ENCODE measurements at regions of chr3 and their contacts with region 1.

Region 1: DNA sequence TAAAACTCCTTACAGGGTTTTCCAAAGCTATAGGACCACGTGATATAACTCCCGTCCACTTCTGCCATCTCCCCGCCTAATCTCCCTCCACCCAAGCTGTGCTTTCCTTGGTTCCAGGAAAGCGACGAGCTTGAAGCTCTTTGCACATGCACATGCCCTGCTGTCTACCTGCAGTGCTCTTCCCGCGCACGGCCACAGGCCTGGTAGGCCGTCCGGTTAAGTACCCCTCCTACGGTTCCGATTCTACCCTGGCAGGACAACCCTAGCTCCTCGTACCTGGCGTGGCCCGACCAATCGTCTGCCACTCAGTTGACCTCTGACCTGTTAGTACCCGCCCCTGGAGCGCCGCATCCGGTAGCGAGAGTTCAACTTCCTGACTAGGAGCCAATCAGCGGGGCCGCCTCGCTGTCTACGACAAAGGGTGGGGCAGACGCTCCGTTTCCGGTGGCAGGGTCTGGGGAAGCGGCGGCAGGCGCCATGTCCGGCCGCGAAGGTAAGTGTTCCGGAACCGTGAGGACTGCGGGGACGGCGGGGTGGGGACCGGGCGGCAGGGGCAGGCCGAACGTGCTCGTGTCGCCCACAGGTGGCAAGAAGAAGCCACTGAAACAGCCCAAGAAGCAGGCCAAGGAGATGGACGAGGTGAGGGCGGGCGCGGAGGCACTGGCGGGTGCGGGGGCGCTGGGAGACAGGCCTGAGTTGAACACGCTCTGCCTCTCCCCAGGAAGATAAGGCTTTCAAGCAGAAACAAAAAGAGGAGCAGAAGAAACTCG is at the starts of genes CCDC51 and TMA7:
- DNase-seq: peak; percentile 93
- H3K4me3 ChIP-seq: peak within 1 kb of the TSS; percentile 74
- H3K27ac ChIP-seq: peak within 1 kb of the TSS; percentile 80
- H3K4me1 ChIP-seq: no peaks in the 10 kb centered on the region
- H3K27me3 ChIP-seq: no peaks in the 10 kb centered on the region
- CTCF ChIP-seq: no peak
- total RNA-seq, gene CCDC51: 11.7 and 11.8 TPM in 2 replicates
- total RNA-seq, gene TMA7: 118 and 152 TPM in 2 replicates

Region 2: DNA sequence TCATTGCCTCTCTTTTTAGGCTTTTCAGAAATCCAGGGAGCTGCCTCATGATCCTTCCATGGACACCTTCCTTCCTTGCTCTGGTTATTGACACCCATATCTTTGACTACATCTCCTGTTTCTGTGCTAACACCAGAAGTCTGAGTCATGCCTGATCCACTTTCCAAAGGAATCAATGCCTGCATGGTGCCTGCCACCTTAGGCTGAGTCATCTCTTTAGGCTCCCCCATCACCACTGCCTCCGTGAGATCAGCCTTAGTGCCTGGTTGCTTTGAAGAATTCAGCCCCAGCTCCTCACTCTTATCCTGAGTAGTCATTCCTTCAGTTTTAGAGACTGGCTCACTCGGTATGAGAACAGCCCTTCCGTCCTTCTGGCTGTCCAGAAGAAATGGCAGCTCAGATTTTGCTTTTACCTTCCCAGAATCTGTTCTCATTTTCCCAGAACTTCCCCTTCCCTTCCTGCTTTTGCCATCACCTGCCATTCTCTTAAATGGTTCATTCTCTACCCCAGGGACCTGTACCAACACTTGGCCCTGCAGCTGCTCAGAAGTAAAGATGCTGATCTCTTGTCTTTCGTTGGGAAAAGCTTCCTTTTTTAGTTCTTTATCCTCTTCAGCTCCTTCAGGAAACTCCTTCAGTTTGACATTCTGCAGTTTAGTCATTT is 529.1 kb before region 1 on chr3:
- CTCF ChIA-PET with region 1: no interaction called
- POLR2A ChIA-PET with region 1: no interaction called
- intact Hi-C with region 1: no loop called
- DNase-seq: peak; percentile 32
- H3K4me3 ChIP-seq: no peak overlapping the region
- H3K27ac ChIP-seq: no peak overlapping the region
- H3K4me1 ChIP-seq: no peaks in the 10 kb centered on the region
- H3K27me3 ChIP-seq: no peaks in the 10 kb centered on the region
- CTCF ChIP-seq: no peak

Region 3: GRCh38 chr3:48194446-48195071 is 245.4 kb before region 1 on chr3:
- CTCF ChIA-PET with region 1: interaction called, 16 read pairs
- POLR2A ChIA-PET with region 1: no interaction called
- intact Hi-C with region 1: no loop called
- DNase-seq: peak; percentile 72
- H3K4me3 ChIP-seq: no peak overlapping the region
- H3K27ac ChIP-seq: no peak overlapping the region
- H3K4me1 ChIP-seq: no peaks in the 10 kb centered on the region
- H3K27me3 ChIP-seq: no peaks in the 10 kb centered on the region
- CTCF ChIP-seq: peak; percentile 72

Region 4: DNA sequence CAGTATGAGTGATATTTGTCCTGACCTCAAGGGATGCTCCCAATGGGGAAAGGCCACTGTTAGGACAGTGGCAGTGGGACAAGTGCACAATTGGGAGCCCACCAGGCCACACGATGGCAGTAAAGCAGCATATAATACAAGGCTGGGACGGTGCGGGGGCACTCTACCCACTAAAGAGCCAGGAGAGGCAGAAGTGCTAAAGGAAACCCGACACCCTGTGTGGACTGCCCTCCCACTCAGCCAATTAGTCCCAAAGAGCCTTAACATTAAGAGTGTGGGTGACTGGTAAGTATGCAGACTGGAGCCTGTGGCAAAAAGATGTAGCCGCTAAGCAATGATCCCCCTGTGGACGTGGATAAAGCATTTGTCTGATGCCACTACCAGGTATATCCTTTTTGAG is 207.3 kb before region 1 on chr3:
- CTCF ChIA-PET with region 1: interaction called, 4 read pairs
- POLR2A ChIA-PET with region 1: no interaction called
- intact Hi-C with region 1: loop called (anchors 1 kb)
- DNase-seq: peak; percentile 85
- H3K4me3 ChIP-seq: no peak overlapping the region
- H3K27ac ChIP-seq: no peak overlapping the region
- H3K4me1 ChIP-seq: peaks cover 11% of the 10 kb centered on the region
- H3K27me3 ChIP-seq: no peaks in the 10 kb centered on the region
- CTCF ChIP-seq: peak; percentile 73

Region 5: GRCh38 chr3:48273594-48274211 is 166.3 kb before region 1 on chr3:
- CTCF ChIA-PET with region 1: interaction called, 11 read pairs
- POLR2A ChIA-PET with region 1: no interaction called
- intact Hi-C with region 1: no loop called
- DNase-seq: peak; percentile 47
- H3K4me3 ChIP-seq: no peak overlapping the region
- H3K27ac ChIP-seq: no peak overlapping the region
- H3K4me1 ChIP-seq: no peaks in the 10 kb centered on the region
- H3K27me3 ChIP-seq: no peaks in the 10 kb centered on the region
- CTCF ChIP-seq: peak; percentile 60

Region 6: DNA sequence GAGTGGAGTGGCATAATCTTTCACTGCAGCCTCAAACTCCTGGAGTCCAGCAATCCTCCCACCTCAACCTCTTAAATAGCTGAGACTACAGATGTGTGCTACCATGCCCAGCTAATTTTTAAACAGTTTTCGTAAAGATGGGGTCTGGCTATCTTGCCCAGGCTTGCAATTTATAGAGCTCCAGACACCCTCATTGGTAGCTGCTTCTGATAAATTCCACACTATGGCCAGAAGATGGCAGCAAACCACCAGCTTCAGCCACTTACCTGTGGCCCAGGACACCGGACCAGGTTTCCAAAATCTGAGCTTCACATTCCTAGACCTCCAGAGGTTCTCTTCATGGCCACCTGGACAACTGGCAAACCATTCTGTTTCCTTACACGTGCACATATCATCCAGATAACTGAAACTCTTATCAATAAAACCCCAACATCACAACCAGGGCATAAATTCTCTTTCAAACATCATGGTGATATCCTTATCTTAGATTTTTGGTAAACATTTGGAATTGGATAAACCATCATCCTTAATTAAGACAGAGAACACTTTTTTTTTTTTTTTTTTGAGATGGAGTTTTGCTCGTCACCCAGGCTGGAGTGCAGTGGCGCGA is 39.1 kb before region 1 on chr3:
- CTCF ChIA-PET with region 1: interaction called, 23 read pairs
- POLR2A ChIA-PET with region 1: no interaction called
- intact Hi-C with region 1: loop called (anchors 5 kb)
- DNase-seq: peak; percentile 44
- H3K4me3 ChIP-seq: no peak overlapping the region
- H3K27ac ChIP-seq: no peak overlapping the region
- H3K4me1 ChIP-seq: no peaks in the 10 kb centered on the region
- H3K27me3 ChIP-seq: no peaks in the 10 kb centered on the region
- CTCF ChIP-seq: peak; percentile 57

Region 7: DNA sequence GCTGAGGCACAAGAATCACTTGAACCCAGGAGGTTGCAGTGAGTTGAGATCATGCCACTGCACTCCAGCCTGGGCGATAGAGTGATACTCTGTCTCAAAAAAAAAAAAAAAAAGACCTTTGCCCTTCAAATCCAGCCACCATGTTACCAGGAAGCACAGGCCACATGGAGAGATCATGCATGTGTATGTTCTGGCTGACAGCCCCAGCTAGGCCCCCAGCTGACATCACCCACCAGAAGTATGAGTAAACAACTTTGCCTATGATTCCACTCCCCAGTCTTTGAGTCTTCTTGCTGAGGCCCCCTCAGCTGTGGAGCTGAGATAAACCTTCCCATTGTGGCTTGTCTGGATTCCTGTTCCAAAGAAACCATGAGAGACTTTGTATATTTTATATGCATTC is 475.3 kb after region 1 on chr3:
- CTCF ChIA-PET with region 1: no interaction called
- POLR2A ChIA-PET with region 1: no interaction called
- intact Hi-C with region 1: no loop called
- DNase-seq: no peak
- H3K4me3 ChIP-seq: no peak overlapping the region
- H3K27ac ChIP-seq: no peak overlapping the region
- H3K4me1 ChIP-seq: no peaks in the 10 kb centered on the region
- H3K27me3 ChIP-seq: no peaks in the 10 kb centered on the region
- CTCF ChIP-seq: no peak

Measured in A673 (cell line).